ENCODE measurements at regions of chr2 and their contacts with region 1.

Region 1: DNA sequence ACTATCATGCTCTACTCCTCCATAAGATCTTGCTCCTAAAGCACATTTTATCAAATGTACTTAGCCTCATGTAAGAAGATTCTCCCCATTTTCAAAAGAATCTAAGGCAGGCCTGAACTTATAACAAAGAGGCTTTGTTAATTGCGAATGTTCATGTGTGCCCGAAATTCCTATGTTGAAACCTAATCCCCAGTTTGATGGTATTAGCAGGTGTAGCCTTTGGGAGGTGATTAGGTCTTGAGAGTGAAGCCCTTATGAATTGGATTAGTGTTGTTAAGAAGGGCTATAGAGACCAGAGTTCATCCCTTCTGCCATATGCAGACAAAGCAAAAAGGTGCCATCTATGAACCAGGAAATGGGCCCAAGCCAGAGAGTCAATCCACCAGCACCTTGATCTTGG is 234.5 kb downstream of the PAX3 start:
- DNase-seq: no peak
- ATAC-seq: no peak

Region 2: GRCh38 chr2:222305516-222306392 is 241.5 kb after region 1 on chr2:
- intact Hi-C with region 1: loop called (anchors 5 to 10 kb)
- DNase-seq: no peak
- ATAC-seq: peak in 1 of 2 donors; percentile 46

Measured in left cardiac atrium (tissue), 4 donors.